Tibial artery (tissue), 4 donors: ENCODE measurements at regions of chr10 and their contacts with region 1.

Region 1: DNA sequence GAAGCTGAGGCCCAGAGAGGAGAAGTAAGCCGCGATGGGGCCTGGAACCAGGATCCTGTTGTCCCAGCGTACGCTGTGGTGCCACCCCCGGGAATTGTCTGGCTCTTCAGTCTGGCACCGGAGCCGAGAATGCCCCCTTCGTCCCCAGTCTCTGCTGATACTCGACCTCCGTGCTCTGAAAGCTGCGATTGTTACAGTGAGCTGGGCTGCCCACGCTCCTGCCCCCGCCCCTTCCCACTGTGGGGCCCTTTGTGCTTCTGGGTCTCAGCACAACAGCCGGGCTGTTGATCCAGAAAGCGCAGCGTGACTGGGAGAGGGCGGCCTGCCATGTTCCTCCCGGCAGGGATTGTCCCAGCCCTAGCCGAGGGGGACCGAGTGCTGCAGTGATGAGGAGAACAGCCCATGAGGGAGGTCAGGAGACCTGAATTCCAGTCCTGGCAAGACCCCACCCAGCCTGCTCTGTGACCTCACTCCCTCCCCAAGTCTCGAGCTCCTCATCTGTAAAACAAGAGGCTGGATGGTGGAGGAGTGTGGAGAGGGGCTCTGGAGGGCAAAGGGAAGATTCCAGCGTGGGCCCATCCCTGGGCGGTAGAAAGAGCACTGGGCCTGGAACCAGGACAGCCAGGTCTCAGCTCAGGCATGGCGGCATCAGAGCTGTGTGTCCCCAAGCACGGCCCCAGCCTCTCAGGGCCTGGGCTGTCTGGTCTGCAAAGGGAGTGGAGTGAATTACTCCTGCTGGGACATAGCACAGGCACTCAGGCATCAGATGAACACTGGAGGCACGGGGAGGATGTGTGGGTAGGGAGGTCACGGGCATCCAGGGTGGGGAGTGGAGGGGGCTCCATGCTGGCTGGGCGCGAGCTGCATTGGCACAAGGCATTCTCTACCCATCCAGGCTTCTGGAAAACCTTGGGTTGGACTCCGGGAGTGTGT is 43.6 kb downstream of the TSPAN15 start:
- DNase-seq: peak in 1 of 2 donors; percentile 58
- H3K4me3 ChIP-seq: no peak overlapping the region
- H3K27ac ChIP-seq: no peak overlapping the region
- H3K4me1 ChIP-seq: peaks cover 0 to 48% (median 32%) of the 10 kb centered on the region in 4 donors
- H3K27me3 ChIP-seq: no peaks in the 10 kb centered on the region
- CTCF ChIP-seq: no peak

Region 2: GRCh38 chr10:69451209-69451783 is 43.6 kb before region 1 on chr10 and contains the start of gene TSPAN15:
- intact Hi-C with region 1: loop called (anchors 5 kb)
- DNase-seq: peak; percentile 81 to 94
- H3K4me3 ChIP-seq: peak within 1 kb of the TSS; percentile 71 to 88
- H3K27ac ChIP-seq: peak within 1 kb of the TSS; percentile 67 to 70
- H3K4me1 ChIP-seq: peaks cover 0 to 41% (median 18%) of the 10 kb centered on the region in 4 donors
- H3K27me3 ChIP-seq: no peaks in the 10 kb centered on the region
- CTCF ChIP-seq: peak in 1 of 2 experiments; percentile 6

Region 3: GRCh38 chr10:70191972-70192305 is 697.0 kb after region 1 on chr10:
- intact Hi-C with region 1: no loop called
- DNase-seq: no peak
- H3K4me3 ChIP-seq: no peak overlapping the region
- H3K27ac ChIP-seq: no peak overlapping the region
- H3K4me1 ChIP-seq: peaks cover 0 to 38% (median 3%) of the 10 kb centered on the region in 4 donors
- H3K27me3 ChIP-seq: no peaks in the 10 kb centered on the region
- CTCF ChIP-seq: no peak